GM12878 (cell line): ENCODE measurements at regions of chr9 and their contacts with region 1.

Region 1: DNA sequence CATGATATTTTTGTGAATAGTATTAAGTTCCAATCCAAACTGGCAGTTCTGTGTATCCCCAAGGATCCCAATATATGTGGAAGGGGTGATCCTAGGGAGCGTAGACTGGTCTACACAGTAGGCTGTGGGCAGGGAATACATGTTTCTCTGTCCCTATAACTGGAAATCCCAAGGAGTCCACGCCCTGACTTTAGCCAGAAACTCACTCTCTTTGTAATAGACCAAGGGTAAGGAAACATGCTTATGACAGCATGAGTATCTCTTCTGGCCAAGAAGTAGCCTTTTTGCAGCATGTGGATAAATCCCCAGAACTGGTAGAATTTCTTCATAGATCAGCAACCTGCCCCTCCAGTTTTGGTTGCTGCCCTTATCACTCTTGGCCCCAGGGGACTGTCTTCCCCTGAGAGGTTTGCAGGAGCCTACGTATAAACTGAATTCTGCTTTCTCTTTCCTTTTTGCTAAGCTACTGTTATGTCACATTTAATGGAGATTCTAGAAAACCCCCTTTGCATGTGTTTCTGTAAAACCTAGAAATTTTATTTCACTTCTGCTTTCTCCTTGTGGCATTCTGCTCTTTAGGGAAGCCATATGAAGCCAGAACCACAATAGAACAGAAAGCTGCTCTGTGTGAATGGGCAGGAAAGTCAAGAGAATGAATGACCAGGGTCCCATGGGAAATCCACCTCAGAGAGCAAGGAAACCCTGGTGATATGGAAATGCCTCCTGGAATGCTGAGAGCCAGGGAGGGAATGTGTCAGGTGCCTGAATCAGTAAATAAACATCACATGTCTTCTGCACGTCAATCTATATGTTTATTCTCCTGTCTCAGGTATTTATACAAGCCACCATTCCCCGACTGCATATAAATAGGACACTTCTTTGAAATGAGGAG is 3.5 kb downstream of the IFNA2 start:
- DNase-seq: peak; percentile 94
- ATAC-seq: peak; percentile 92
- H3K4me3 ChIP-seq: peak overlapping the region; percentile 25; the same call in 1 of the 2 replicates
- H3K27ac ChIP-seq: peak overlapping the region; percentile 69
- H3K4me1 ChIP-seq: peaks cover 22% of the 10 kb centered on the region
- H3K27me3 ChIP-seq: no peaks in the 10 kb centered on the region
- CTCF ChIP-seq: no peak
- EP300 ChIP-seq: peak; percentile 92 to 93
- POLR2A ChIP-seq: no peak
- RAD21 ChIP-seq: 0 out of 2 replicates have a peak, but pooled peaks have one; percentile 6

Region 2: GRCh38 chr9:19451240-19452087 is 1930.2 kb before region 1 on chr9:
- CTCF ChIA-PET with region 1: no interaction called
- POLR2A ChIA-PET with region 1: no interaction called
- RAD21 ChIA-PET with region 1: no interaction called
- SMC1A ChIA-PET with region 1: no interaction called
- in situ Hi-C with region 1: no loop called
- intact Hi-C with region 1: loop called (anchors 5 kb)
- DNase-seq: peak; percentile 71
- ATAC-seq: peak; percentile 94
- H3K4me3 ChIP-seq: peak overlapping the region; percentile 25; the same call in 1 of the 2 replicates
- H3K27ac ChIP-seq: peak overlapping the region; percentile 76
- H3K4me1 ChIP-seq: peaks cover 12% of the 10 kb centered on the region
- H3K27me3 ChIP-seq: no peaks in the 10 kb centered on the region
- CTCF ChIP-seq: no peak
- EP300 ChIP-seq: peak in 1 of 2 experiments; percentile 65; a peak in 2 of 4 replicates
- POLR2A ChIP-seq: peak; percentile 35; the same call in 1 of the 2 replicates
- RAD21 ChIP-seq: no peak

Region 3: GRCh38 chr9:20854444-20854843 is 527.2 kb before region 1 on chr9:
- CTCF ChIA-PET with region 1: no interaction called
- POLR2A ChIA-PET with region 1: no interaction called
- RAD21 ChIA-PET with region 1: no interaction called
- SMC1A ChIA-PET with region 1: no interaction called
- in situ Hi-C with region 1: no loop called
- intact Hi-C with region 1: no loop called
- DNase-seq: no peak
- ATAC-seq: no peak
- H3K4me3 ChIP-seq: no peak overlapping the region
- H3K27ac ChIP-seq: no peak overlapping the region
- H3K4me1 ChIP-seq: no peaks in the 10 kb centered on the region
- H3K27me3 ChIP-seq: no peaks in the 10 kb centered on the region
- CTCF ChIP-seq: no peak
- EP300 ChIP-seq: no peak
- POLR2A ChIP-seq: no peak
- RAD21 ChIP-seq: no peak

Region 4: DNA sequence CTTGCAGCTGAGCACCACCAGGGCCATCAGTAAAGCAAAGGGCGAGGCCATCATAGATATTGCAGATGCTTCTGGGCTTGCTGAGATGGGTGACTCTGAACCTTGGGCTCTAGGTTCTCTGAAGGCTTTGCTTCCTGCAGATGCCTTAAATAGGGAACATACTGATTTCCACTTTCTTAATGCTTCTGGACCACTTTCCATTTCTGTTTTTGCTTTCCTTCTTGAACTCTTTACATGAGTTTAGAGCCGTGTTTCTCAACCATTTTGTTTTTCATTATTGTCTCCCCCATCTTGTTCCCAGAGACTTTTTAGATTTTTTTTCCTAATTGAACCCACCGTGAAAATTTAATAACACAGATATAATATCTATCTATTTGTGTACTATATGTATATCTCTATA is 13.7 kb before region 1 on chr9 and contains the start of gene IFNA13:
- CTCF ChIA-PET with region 1: interaction called, 18 read pairs
- POLR2A ChIA-PET with region 1: interaction called, 5 read pairs
- RAD21 ChIA-PET with region 1: interaction called, 9 read pairs
- SMC1A ChIA-PET with region 1: interaction called, 24 read pairs
- in situ Hi-C with region 1: no loop called
- intact Hi-C with region 1: no loop called
- DNase-seq: no peak
- ATAC-seq: no peak
- H3K4me3 ChIP-seq: no peak within 1 kb of the TSS
- H3K27ac ChIP-seq: no peak within 1 kb of the TSS
- H3K4me1 ChIP-seq: no peaks in the 10 kb centered on the region
- H3K27me3 ChIP-seq: no peaks in the 10 kb centered on the region
- CTCF ChIP-seq: no peak
- EP300 ChIP-seq: no peak
- POLR2A ChIP-seq: no peak
- RAD21 ChIP-seq: no peak
- polyA plus RNA-seq, gene IFNA13: not detected

Region 5: GRCh38 chr9:21402386-21403251 is 20.9 kb after region 1 on chr9:
- CTCF ChIA-PET with region 1: interaction called, 15 read pairs
- POLR2A ChIA-PET with region 1: no interaction called
- RAD21 ChIA-PET with region 1: interaction called, 5 read pairs
- SMC1A ChIA-PET with region 1: interaction called, 7 read pairs
- in situ Hi-C with region 1: no loop called
- intact Hi-C with region 1: no loop called
- DNase-seq: no peak
- ATAC-seq: peak; percentile 83
- H3K4me3 ChIP-seq: peak overlapping the region; percentile 53; the same call in 1 of the 2 replicates
- H3K27ac ChIP-seq: no peak overlapping the region
- H3K4me1 ChIP-seq: no peaks in the 10 kb centered on the region
- H3K27me3 ChIP-seq: peaks cover 0 to 2% of the 10 kb centered on the region in 2 experiments; a peak in 2 of 4 replicates
- CTCF ChIP-seq: peak; percentile 2 to 32 (median 16); a peak in 2 of 6 replicates
- EP300 ChIP-seq: no peak
- POLR2A ChIP-seq: no peak
- RAD21 ChIP-seq: no peak

Region 6: GRCh38 chr9:21434202-21435014 is 52.7 kb after region 1 on chr9:
- CTCF ChIA-PET with region 1: interaction called, 11 read pairs
- POLR2A ChIA-PET with region 1: no interaction called
- RAD21 ChIA-PET with region 1: interaction called, 3 read pairs
- SMC1A ChIA-PET with region 1: interaction called, 4 read pairs
- in situ Hi-C with region 1: no loop called
- intact Hi-C with region 1: no loop called
- DNase-seq: no peak
- ATAC-seq: peak; percentile 47; the same call in 1 of the 3 replicates
- H3K4me3 ChIP-seq: no peak overlapping the region
- H3K27ac ChIP-seq: no peak overlapping the region
- H3K4me1 ChIP-seq: peaks cover 6% of the 10 kb centered on the region; the same call in 1 of the 2 replicates
- H3K27me3 ChIP-seq: no peaks in the 10 kb centered on the region
- CTCF ChIP-seq: peak; percentile 46 to 51 (median 49); a peak in 5 of 6 replicates
- EP300 ChIP-seq: no peak
- POLR2A ChIP-seq: no peak
- RAD21 ChIP-seq: peak; percentile 38

Region 7: GRCh38 chr9:21744841-21745240 is 363.1 kb after region 1 on chr9:
- CTCF ChIA-PET with region 1: no interaction called
- POLR2A ChIA-PET with region 1: no interaction called
- RAD21 ChIA-PET with region 1: no interaction called
- SMC1A ChIA-PET with region 1: no interaction called
- in situ Hi-C with region 1: no loop called
- intact Hi-C with region 1: no loop called
- DNase-seq: no peak
- ATAC-seq: no peak
- H3K4me3 ChIP-seq: no peak overlapping the region
- H3K27ac ChIP-seq: no peak overlapping the region
- H3K4me1 ChIP-seq: no peaks in the 10 kb centered on the region
- H3K27me3 ChIP-seq: peaks cover 2 to 4% of the 10 kb centered on the region in 2 experiments; a peak in 3 of 4 replicates
- CTCF ChIP-seq: no peak
- EP300 ChIP-seq: no peak
- POLR2A ChIP-seq: no peak
- RAD21 ChIP-seq: no peak